PC-9 (cell line): ENCODE measurements at regions of chr12 and their contacts with region 1.

Region 1: GRCh38 chr12:39103552-39104165 is 198.3 kb upstream of the CPNE8 start:
- DNase-seq: peak; percentile 18 to 52
- H3K4me3 ChIP-seq: no peak overlapping the region
- H3K27ac ChIP-seq: no peak overlapping the region
- H3K4me1 ChIP-seq: 0 out of 2 replicates have a peak, but pooled peaks cover 4% of the 10 kb centered on the region
- H3K27me3 ChIP-seq: no peaks in the 10 kb centered on the region
- CTCF ChIP-seq: peak; percentile 86

Region 2: DNA sequence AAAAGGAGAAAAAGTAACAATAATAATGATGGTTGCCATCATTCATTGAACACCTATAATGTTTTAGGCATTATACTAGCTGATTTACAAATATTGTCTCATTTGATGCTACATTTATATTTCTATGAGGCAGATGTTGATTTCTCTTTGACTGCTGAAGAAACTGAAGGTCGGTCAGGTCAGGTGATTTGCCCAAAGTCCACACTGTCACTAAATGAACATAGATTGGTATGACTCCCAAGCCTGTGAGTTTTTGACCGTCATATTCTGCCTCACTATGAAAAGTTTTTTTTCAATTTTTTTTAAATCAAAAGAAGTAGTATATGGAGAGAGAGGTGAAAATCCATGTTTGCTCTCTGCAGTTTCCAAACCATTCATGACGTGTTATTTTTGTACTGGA is 776.3 kb before region 1 on chr12:
- CTCF ChIA-PET with region 1: no interaction called
- POLR2A ChIA-PET with region 1: no interaction called
- intact Hi-C with region 1: loop called (anchors 1 kb)
- DNase-seq: no peak
- H3K4me3 ChIP-seq: no peak overlapping the region
- H3K27ac ChIP-seq: no peak overlapping the region
- H3K4me1 ChIP-seq: no peaks in the 10 kb centered on the region
- H3K27me3 ChIP-seq: no peaks in the 10 kb centered on the region
- CTCF ChIP-seq: no peak

Region 3: GRCh38 chr12:38384816-38385378 is 718.8 kb before region 1 on chr12:
- CTCF ChIA-PET with region 1: no interaction called
- POLR2A ChIA-PET with region 1: no interaction called
- intact Hi-C with region 1: loop called (anchors 1 kb)
- DNase-seq: peak; percentile 91 to 97
- H3K4me3 ChIP-seq: peak overlapping the region; percentile 44; the same call in 1 of the 2 replicates
- H3K27ac ChIP-seq: peak overlapping the region; percentile 98
- H3K4me1 ChIP-seq: peaks cover 37% of the 10 kb centered on the region
- H3K27me3 ChIP-seq: no peaks in the 10 kb centered on the region
- CTCF ChIP-seq: peak; percentile 87

Region 4: DNA sequence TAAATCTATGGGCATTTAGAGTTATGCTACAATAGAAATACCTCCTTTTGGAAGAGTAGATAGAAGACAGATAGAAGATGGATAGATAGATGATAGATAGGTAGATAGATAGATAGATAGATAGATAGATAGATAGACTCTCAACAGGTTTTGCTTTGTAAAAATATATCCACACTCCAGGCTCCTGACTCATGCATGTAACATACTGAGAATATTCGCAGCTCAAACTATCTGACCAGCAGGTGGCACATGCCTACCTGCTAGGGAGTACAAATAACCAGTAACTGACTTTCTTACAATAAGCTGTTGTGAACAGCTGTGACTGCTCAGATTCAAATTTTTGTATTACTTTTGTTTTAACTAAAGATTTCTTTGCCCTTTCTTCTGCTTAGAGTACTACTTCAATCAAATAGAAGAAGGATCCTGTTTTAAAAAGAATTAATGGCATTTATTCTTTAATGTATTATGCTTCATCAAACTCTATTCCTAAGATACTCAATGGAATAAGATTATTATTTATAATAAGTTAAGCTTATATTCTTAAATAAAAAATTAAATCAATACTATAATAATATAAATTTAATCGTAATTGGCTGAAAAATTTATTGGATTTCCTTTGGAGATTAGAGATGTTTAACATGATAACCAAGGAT is 182.5 kb before region 1 on chr12:
- CTCF ChIA-PET with region 1: interaction called, 16 read pairs
- POLR2A ChIA-PET with region 1: no interaction called
- intact Hi-C with region 1: loop called (anchors 1 kb)
- DNase-seq: peak; percentile 40 to 58
- H3K4me3 ChIP-seq: no peak overlapping the region
- H3K27ac ChIP-seq: no peak overlapping the region
- H3K4me1 ChIP-seq: no peaks in the 10 kb centered on the region
- H3K27me3 ChIP-seq: no peaks in the 10 kb centered on the region
- CTCF ChIP-seq: peak; percentile 75

Region 5: DNA sequence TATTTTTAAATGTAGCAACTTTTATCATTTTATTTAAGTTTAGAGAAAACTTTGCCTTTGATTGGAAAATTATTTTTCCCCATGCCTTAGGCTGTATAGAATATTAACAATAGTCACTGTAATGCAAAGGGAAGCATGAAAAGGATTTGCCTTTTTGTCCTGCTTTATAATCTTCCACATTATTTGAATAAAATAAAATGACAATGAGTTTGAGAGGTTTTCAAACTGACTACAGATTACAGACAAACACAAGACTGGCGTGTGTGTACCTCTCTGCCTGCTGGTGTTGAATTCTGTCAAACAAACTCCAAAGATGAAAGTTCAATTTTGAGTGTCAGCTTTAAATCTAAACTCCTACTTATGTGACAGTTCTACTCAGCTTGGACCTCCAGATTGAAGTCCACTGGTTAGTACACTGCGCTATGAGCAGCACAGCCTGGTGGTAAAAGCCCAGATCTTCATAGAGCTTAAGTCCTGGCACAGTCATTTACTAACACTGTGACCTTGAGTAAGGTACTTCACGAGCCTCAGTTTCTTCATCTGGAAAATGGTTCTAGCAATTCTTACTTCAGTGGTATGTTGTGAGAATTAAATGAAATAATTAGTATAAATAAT is 100.0 kb before region 1 on chr12:
- CTCF ChIA-PET with region 1: no interaction called
- POLR2A ChIA-PET with region 1: no interaction called
- intact Hi-C with region 1: no loop called
- DNase-seq: no peak
- H3K4me3 ChIP-seq: no peak overlapping the region
- H3K27ac ChIP-seq: no peak overlapping the region
- H3K4me1 ChIP-seq: no peaks in the 10 kb centered on the region
- H3K27me3 ChIP-seq: no peaks in the 10 kb centered on the region
- CTCF ChIP-seq: no peak

Region 6: DNA sequence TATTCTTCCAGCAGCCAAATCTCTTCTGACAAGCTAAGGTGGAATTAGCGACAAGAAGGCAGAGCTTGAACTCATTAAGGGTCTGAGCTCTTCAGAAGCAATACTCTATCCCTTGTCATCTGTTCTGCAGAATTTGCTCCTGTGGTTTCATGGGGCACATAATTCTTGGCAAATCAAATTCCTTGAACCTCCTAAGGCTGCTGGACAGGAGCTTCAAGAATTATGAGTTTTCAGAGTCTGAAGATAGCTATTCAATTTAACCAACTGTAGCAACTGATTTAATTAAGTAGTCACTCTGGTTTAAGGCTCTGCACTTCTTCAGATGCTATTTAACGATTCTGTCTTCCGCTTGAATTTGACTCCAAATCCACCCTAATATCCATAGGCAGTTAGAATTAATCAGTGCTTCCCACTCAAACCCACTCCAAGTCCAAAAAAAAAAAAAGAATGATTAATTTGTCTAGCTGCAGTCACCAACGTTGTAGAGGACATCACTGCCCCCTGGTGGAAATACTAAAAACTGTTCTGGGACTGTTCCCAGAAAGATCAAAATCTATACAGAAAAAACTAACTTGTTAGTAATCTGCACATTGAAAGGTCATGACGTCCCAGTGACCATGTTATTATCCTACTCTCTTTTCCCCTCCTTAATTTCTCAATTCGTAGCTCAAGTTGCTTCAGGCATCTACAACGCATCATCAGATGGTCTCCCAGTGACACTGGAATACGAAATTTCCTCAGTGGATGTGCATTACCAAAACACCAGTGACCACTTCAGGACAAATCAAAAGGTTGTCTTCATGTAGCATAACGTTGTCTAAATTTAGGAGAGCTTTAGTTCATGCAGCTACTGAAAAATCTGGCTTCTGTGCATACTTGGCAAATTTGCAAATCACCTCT is 169.5 kb after region 1 on chr12:
- CTCF ChIA-PET with region 1: no interaction called
- POLR2A ChIA-PET with region 1: no interaction called
- intact Hi-C with region 1: loop called (anchors 5 kb)
- DNase-seq: peak in 1 of 2 experiments; percentile 19
- H3K4me3 ChIP-seq: no peak overlapping the region
- H3K27ac ChIP-seq: no peak overlapping the region
- H3K4me1 ChIP-seq: no peaks in the 10 kb centered on the region
- H3K27me3 ChIP-seq: no peaks in the 10 kb centered on the region
- CTCF ChIP-seq: peak; percentile 78